ENCODE measurements at regions of chr18 and their contacts with region 1.

Region 1: DNA sequence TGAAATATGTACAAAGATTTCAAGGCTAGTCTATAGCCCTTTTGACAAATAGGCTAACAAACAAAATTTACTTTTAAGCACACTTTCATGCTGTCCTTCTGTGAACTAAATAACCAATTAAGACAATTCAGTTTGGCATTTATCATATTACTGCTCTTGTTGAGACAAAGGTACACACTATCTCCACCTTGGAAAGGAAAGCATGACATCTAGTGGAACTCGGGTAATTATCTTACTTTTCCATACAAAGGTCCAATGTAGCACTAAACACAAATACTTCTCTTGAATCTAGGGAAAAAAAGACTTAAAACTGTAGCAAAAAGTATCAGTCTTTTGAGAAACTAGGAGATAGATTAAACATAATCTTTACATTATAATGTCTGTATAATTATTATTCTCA is 125.0 kb upstream of the CD226 start:
- DNase-seq: no peak
- H3K4me3 ChIP-seq: no peak overlapping the region
- H3K4me3 Mint-ChIP-seq: no peak overlapping the region
- H3K27ac Mint-ChIP-seq: no peak overlapping the region
- H3K4me1 ChIP-seq: no peaks in the 10 kb centered on the region
- H3K4me1 Mint-ChIP-seq: no peaks in the 10 kb centered on the region
- H3K27me3 ChIP-seq: no peaks in the 10 kb centered on the region
- H3K27me3 Mint-ChIP-seq: no peaks in the 10 kb centered on the region
- CTCF ChIP-seq: no peak

Region 2: DNA sequence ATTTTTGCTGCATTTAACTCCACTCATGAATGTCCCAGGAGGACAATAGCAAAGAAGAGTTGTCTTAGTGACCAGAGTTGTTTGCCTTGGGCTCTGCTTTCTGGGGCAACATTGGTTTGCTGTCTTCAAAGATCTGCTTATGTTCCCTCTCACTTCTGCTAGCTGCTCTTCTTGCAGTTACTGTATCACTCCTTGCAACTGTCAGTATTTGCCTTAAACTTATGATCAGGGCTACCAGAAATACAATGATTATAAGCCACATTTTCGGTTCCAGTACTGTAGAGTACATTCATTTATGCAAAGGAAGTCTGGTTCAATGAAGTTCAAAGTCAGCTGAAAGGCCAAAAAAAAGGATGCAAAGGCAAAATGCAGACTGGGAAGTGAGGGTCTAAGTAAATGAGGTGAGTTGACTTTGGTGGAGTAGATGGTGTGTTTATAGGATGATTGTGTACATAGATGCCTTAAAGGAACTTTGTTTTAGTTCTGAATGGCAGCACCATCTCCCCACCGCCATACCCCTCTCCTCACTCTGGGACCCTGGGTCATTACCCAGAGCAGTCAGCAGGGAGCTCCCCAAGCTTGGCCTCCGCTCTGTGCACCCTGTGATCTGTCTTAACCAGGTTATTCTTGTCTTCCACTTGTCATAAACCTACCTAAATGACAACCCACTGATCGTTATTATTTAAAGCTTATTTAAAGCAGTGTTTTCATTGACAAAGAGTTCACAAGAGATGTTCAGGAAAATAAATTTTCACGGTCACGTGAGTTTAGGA is 436.0 kb before region 1 on chr18:
- CTCF ChIA-PET with region 1: no interaction called
- POLR2A ChIA-PET with region 1: no interaction called
- intact Hi-C with region 1: loop called (anchors 2 kb)
- DNase-seq: peak in 1 of 2 experiments; percentile 19
- H3K4me3 ChIP-seq: no peak overlapping the region
- H3K4me3 Mint-ChIP-seq: no peak overlapping the region
- H3K27ac Mint-ChIP-seq: no peak overlapping the region
- H3K4me1 ChIP-seq: no peaks in the 10 kb centered on the region
- H3K4me1 Mint-ChIP-seq: no peaks in the 10 kb centered on the region
- H3K27me3 ChIP-seq: no peaks in the 10 kb centered on the region
- H3K27me3 Mint-ChIP-seq: peaks cover 5% of the 10 kb centered on the region
- CTCF ChIP-seq: peak; percentile 25 to 47

Region 3: GRCh38 chr18:70181015-70181414 is 108.3 kb after region 1 on chr18:
- CTCF ChIA-PET with region 1: no interaction called
- POLR2A ChIA-PET with region 1: no interaction called
- intact Hi-C with region 1: no loop called
- DNase-seq: peak in 1 of 2 experiments; percentile 47
- H3K4me3 ChIP-seq: no peak overlapping the region
- H3K4me3 Mint-ChIP-seq: peak overlapping the region; percentile 56
- H3K27ac Mint-ChIP-seq: peak overlapping the region; percentile 64
- H3K4me1 ChIP-seq: peaks cover 25% of the 10 kb centered on the region; the same call in 1 of the 2 replicates
- H3K4me1 Mint-ChIP-seq: peaks cover 17% of the 10 kb centered on the region
- H3K27me3 ChIP-seq: no peaks in the 10 kb centered on the region
- H3K27me3 Mint-ChIP-seq: no peaks in the 10 kb centered on the region
- CTCF ChIP-seq: no peak